ENCODE measurements at regions of chr20 and their contacts with region 1.

Region 1: DNA sequence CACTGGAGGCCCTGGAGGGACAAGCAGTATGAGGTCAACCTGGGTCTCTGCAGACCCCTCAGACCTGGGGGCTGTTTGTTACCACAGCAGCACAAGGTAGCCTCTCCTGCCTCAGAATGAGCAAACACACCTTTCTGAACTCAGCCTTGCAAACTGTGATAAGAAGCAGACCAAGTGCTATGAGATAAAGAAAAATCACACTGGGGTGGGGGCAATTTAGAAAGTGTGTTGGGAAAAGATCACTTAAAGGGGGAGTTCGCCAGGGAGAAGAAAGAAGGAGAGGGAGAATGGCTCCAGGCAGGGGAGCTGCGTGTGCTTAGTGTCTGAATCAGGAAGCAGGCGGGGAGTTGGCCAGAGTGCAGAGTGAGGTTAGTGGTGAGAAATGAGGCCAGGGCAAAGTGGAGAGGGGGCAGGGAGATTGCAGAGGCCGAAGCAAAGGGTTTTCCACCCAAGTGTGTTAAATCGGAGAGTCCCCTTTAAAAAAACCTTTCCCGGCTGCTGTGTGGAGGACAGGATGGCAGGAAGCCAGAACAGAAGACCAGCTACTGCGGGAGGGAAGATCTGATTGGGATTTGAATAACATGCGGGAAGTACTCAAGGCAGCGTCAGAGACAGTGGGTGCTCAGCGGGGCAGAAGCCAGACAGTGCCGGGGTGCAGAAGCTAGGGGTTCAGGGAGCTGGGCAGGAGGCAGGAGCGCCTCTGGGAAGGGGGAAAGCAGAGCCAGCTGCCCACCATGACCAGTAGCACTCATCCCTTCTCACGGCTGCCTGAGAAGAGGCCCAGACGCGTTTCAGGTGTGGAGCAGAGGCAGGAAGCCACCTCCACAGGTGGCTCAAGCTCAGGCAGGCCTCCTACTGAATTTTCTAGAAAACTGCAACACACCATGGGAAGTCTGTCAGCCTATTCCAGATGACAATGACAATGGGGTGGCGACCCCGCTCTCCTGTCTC is 9.0 kb downstream of the ADA start:
- DNase-seq: no peak
- H3K4me3 Mint-ChIP-seq: peak overlapping the region; percentile 31
- H3K27ac Mint-ChIP-seq: peak overlapping the region; percentile 97
- H3K4me1 Mint-ChIP-seq: peaks cover 77% of the 10 kb centered on the region
- H3K27me3 Mint-ChIP-seq: no peaks in the 10 kb centered on the region

Region 2: GRCh38 chr20:44683263-44684046 is 41.0 kb after region 1 on chr20:
- intact Hi-C with region 1: loop called (anchors 5 kb)
- DNase-seq: peak; percentile 25
- H3K4me3 Mint-ChIP-seq: no peak overlapping the region
- H3K27ac Mint-ChIP-seq: no peak overlapping the region
- H3K4me1 Mint-ChIP-seq: peaks cover 17% of the 10 kb centered on the region
- H3K27me3 Mint-ChIP-seq: no peaks in the 10 kb centered on the region

Measured in activated T-helper 1 cell treated with anti-CD3 and anti-CD28 coated beads, Interleukin-12 subunit alpha, Interleukin-12 subunit beta, Interleukin-2, Interleukin-4 antibody, amounts not matched to agents 30 ng/mL and 10 ng/mL and 1 ng/mL, durations not matched to agents 14 hours and 24 hours and 36 hours (primary cell).